HCT116 (cell line): ENCODE measurements at regions of chr2 and their contacts with region 1.

Region 1: GRCh38 chr2:160994141-160995002 is 165.9 kb upstream of the TANK start:
- DNase-seq: peak; percentile 66
- ATAC-seq: peak; percentile 95
- H3K4me3 ChIP-seq: no peak overlapping the region
- H3K27ac ChIP-seq: no peak overlapping the region
- H3K4me1 ChIP-seq: peaks cover 2 to 5% of the 10 kb centered on the region in 2 experiments; a peak in 2 of 4 replicates
- H3K27me3 ChIP-seq: no peaks in the 10 kb centered on the region
- CTCF ChIP-seq: peak; percentile 76 to 83 (median 76); a peak in 5 of 6 replicates
- POLR2A ChIP-seq: no peak
- RAD21 ChIP-seq: peak; percentile 94

Region 2: GRCh38 chr2:160087854-160088745 is 906.3 kb before region 1 on chr2:
- CTCF ChIA-PET with region 1: no interaction called
- POLR2A ChIA-PET with region 1: no interaction called
- RAD21 ChIA-PET with region 1: no interaction called
- intact Hi-C with region 1: loop called (anchors 5 kb)
- DNase-seq: no peak
- ATAC-seq: peak; percentile 77
- H3K4me3 ChIP-seq: no peak overlapping the region
- H3K27ac ChIP-seq: no peak overlapping the region
- H3K4me1 ChIP-seq: no peaks in the 10 kb centered on the region
- H3K27me3 ChIP-seq: no peaks in the 10 kb centered on the region
- CTCF ChIP-seq: peak; percentile 21 to 50 (median 30); a peak in 2 of 6 replicates
- POLR2A ChIP-seq: no peak
- RAD21 ChIP-seq: peak; percentile 64

Region 3: GRCh38 chr2:160252278-160252887 is 742.0 kb before region 1 on chr2:
- CTCF ChIA-PET with region 1: interaction called, 9 read pairs
- POLR2A ChIA-PET with region 1: no interaction called
- RAD21 ChIA-PET with region 1: interaction called in 1 of 2 experiments, 4 read pairs
- intact Hi-C with region 1: loop called (anchors 1 kb)
- DNase-seq: peak; percentile 34
- ATAC-seq: peak; percentile 47; the same call in 1 of the 2 replicates
- H3K4me3 ChIP-seq: no peak overlapping the region
- H3K27ac ChIP-seq: no peak overlapping the region
- H3K4me1 ChIP-seq: no peaks in the 10 kb centered on the region
- H3K27me3 ChIP-seq: no peaks in the 10 kb centered on the region
- CTCF ChIP-seq: peak; percentile 55 to 76 (median 70)
- POLR2A ChIP-seq: no peak
- RAD21 ChIP-seq: peak; percentile 61

Region 4: DNA sequence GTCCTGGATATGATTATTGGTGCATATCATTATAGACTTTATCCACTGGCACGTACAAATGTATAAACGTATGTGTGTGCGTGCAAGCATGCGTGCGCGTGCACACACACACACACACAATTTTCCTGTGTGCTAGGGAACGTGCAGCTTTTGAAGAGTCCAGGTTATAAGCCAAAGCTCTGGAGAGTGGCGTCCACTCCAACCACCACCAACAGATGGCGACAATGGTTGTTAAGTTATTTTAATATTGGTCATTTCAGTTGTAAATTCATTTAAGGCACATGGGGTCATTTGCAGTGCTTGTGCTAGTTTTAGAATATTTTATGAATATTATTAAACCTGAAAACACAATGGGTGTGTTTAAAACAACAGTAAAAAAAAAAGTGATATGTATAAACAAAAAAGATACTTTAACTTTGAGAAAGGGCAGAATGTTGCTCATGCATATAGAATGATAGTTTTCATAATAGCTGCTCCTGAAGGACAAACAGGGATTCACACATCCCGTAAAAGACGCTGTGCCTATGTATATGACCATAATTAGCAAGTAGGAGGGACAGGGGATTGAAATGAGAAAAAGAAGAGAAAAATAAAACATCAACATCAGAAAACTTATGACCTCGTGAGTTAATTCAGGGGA is 670.1 kb before region 1 on chr2:
- CTCF ChIA-PET with region 1: interaction called, 32 read pairs
- POLR2A ChIA-PET with region 1: no interaction called
- RAD21 ChIA-PET with region 1: interaction called in 1 of 2 experiments, 10 read pairs
- intact Hi-C with region 1: loop called (anchors 1 kb)
- DNase-seq: peak; percentile 26
- ATAC-seq: peak; percentile 87
- H3K4me3 ChIP-seq: no peak overlapping the region
- H3K27ac ChIP-seq: no peak overlapping the region
- H3K4me1 ChIP-seq: no peaks in the 10 kb centered on the region
- H3K27me3 ChIP-seq: no peaks in the 10 kb centered on the region
- CTCF ChIP-seq: peak; percentile 61 to 75 (median 74); a peak in 5 of 6 replicates
- POLR2A ChIP-seq: no peak
- RAD21 ChIP-seq: peak; percentile 76

Region 5: DNA sequence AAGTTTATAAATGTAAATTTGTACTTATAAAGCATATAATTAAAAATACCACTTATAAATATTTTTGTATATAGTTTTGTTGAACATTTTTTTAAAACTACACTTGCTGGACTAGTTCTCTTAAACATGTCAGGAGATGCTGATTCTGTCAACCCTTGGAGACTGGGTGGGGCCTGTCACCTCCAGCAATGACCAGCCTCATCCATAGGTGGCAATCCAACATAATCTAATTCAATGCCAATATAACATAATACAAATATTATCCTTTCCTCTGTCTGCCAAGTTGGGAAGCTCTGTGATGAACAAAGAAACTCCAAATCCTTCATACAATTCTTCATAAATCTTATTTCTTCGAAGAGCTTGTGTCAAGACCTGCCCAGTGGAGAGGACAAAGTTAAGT is 641.2 kb before region 1 on chr2:
- CTCF ChIA-PET with region 1: interaction called, 12 read pairs
- POLR2A ChIA-PET with region 1: no interaction called
- RAD21 ChIA-PET with region 1: interaction called in 1 of 2 experiments, 3 read pairs
- intact Hi-C with region 1: no loop called
- DNase-seq: no peak
- ATAC-seq: peak; percentile 82
- H3K4me3 ChIP-seq: no peak overlapping the region
- H3K27ac ChIP-seq: no peak overlapping the region
- H3K4me1 ChIP-seq: no peaks in the 10 kb centered on the region
- H3K27me3 ChIP-seq: no peaks in the 10 kb centered on the region
- CTCF ChIP-seq: peak; percentile 32 to 52 (median 42); a peak in 4 of 6 replicates
- POLR2A ChIP-seq: no peak
- RAD21 ChIP-seq: peak; percentile 69

Region 6: DNA sequence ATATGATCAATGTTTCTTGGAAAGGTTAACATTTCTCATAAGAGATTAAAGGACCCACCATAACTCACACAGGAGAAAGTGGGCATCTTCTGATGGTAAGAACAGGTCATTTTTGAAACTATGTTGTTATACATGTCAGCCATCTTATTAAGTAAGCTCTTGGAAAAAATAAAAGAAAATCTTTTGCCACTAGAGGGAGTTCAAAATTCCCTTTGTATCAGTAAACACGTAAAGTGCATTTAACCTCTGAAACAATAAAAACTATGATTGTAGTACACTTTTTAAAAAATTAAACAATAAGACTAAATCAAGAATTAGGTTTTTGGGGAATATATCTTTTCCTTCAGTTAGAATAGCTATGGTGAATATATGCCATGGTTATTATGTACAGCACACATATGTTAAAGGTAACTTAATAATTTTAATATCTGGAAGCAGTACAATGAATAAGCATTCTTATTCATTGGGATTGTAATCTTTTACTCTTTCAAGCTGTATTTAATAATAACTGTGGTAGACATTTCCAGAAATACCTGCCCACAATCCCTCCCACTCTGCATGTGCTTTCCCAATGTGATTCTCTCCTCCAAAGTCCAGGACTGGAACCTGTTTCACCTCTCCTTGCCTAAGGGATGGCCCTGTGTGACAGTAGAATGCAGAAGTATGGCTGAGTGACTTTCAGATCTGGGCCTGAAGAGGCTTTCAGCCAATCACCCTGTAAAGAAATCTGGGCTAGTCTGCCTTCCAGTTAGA is 564.9 kb before region 1 on chr2:
- CTCF ChIA-PET with region 1: interaction called, 4 read pairs
- POLR2A ChIA-PET with region 1: no interaction called
- RAD21 ChIA-PET with region 1: no interaction called
- intact Hi-C with region 1: loop called (anchors 10 kb)
- DNase-seq: peak; percentile 56
- ATAC-seq: peak; percentile 61
- H3K4me3 ChIP-seq: no peak overlapping the region
- H3K27ac ChIP-seq: no peak overlapping the region
- H3K4me1 ChIP-seq: peaks cover 24 to 25% of the 10 kb centered on the region in 2 experiments
- H3K27me3 ChIP-seq: no peaks in the 10 kb centered on the region
- CTCF ChIP-seq: peak; percentile 37 to 70 (median 49); a peak in 5 of 6 replicates
- POLR2A ChIP-seq: no peak
- RAD21 ChIP-seq: peak; percentile 56

Region 7: GRCh38 chr2:161004379-161004778 is 10.0 kb after region 1 on chr2:
- CTCF ChIA-PET with region 1: interaction called, 14 read pairs
- POLR2A ChIA-PET with region 1: no interaction called
- RAD21 ChIA-PET with region 1: no interaction called
- intact Hi-C with region 1: no loop called
- DNase-seq: peak; percentile 4
- ATAC-seq: peak; percentile 63
- H3K4me3 ChIP-seq: no peak overlapping the region
- H3K27ac ChIP-seq: no peak overlapping the region
- H3K4me1 ChIP-seq: no peaks in the 10 kb centered on the region
- H3K27me3 ChIP-seq: no peaks in the 10 kb centered on the region
- CTCF ChIP-seq: peak; percentile 35 to 47 (median 44); a peak in 4 of 6 replicates
- POLR2A ChIP-seq: no peak
- RAD21 ChIP-seq: peak; percentile 45; the same call in 1 of the 2 replicates